GM10248 (cell line): ENCODE measurements at regions of chr16 and their contacts with region 1.

Region 1: DNA sequence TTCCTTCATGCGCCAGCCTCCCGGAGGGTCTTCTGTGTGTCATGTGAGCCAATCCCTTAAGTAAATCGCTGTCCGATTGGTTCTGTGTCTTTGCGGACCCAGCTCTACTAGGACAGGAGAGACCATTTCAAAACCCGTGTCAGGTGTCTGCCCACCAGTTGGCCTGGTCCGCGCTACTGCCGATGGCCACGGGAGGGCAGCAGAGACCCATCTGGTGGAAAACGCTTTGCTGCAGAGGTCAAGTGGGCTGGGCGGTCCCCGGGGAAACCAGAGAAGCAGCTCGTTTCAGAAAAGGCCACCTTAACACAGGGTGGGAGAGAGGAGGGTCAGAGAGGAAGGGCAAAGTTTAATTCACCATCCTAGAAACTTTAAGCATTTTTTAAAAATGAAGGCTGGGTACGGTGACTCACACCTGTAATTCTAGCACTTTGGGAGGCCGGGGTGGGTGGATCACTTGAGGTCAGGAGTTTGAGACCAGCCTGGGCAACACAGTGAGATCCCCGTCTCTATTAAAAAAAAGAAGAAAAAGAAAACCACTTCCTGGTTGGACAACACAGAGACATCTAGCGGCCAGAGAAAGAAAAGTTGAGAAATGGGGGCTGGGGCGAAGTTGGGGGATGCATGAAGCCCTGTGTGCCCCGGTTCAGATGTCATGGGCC is 2.8 kb upstream of the CIBAR2 start:
- DNase-seq: peak; percentile 93
- CTCF ChIP-seq: peak; percentile 98

Region 2: GRCh38 chr16:84985079-84986065 is 129.7 kb before region 1 on chr16:
- CTCF ChIA-PET with region 1: no interaction called
- POLR2A ChIA-PET with region 1: no interaction called
- DNase-seq: no peak
- CTCF ChIP-seq: no peak

Region 3: DNA sequence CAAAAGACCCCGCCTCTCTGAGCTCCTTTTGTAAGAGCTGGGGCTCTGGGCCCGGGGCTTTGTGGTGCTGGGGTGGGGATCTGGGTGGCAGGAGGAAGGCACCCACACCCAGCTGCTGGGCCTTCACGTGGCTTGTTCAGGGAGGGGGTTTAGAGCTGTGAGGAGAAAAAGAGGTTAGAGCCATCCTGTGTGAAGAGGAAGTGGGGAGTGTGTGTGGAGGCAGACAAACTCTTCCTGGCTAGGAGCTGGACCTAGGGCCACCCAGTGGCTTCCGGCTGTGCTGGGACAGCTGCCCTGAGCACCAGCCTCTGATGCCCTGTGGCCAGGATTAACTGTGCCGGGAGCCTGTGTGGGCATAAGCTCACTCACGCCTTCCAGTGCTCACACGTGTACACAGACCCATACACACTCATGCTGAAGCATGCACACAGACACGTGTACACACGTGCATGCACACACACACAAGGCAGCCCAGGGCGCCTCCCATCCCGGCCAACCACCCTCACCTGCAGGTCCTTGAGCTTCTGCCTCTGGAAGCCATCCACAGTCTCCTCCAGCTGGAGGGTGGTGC is 10.1 kb before region 1 on chr16:
- CTCF ChIA-PET with region 1: interaction called, 20 read pairs
- POLR2A ChIA-PET with region 1: no interaction called
- DNase-seq: peak; percentile 48
- CTCF ChIP-seq: no peak

Region 4: DNA sequence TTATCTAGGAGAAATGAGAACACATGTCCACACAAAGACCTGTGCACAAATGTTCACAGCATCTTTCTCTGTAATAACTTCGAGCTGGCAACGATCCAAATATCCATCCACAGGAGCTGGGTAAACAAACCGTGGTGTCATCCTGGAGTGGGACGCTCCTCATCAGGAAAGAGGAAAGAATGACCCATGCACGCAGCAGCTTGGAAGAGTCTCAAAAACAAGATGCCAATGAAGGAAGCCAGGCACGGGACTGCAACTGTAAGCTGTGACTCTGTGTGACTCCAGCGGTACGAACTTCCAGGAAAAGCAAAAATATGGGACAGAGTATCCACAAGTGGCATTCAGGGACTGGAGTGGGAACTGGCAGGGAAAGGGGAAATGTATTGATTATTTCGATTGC is 33.9 kb after region 1 on chr16:
- CTCF ChIA-PET with region 1: interaction called, 10 read pairs
- POLR2A ChIA-PET with region 1: interaction called, 4 read pairs
- DNase-seq: no peak
- CTCF ChIP-seq: no peak

Region 5: DNA sequence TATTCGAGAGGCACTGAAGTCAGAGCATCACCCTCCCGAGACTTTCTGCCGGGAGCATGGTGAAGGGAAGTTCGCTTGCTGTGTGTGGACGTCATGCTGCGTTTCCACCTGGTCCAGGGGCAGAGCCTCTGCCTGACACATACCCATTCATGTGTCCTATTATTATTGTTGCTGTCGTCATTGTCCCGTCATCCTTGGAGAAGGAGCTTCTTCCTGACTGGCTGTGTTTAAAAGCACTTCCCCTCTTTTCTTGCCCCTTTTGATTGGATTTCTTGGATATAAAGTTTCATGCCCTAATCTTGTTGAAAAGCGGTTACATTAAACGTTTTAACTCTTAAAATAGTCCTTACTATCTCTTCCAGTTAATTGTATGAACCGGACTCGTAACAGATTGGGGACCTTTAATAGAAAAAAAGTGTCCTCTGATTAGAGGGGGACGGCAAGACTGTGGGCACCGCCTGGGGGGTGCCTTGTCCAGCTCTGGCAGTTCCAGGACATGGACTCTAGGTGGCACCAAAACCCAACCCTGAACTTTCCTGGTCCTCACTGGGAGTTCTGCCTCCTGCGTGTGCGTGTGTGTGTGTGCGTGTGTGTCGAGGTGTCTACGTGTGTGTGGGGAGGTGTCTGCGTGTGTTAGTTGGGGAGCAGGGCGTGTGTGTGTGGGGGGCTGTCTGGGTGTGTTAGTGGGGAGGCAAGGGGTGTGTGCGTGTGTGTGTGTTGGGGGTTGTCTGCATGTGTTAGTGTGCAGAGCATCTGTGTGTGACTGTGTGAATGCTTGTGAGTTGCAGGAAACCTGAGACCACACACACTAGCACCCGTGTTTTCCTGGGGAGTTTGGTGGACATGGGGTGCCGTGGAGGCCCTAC is 130.5 kb after region 1 on chr16:
- CTCF ChIA-PET with region 1: interaction called, 10 read pairs
- POLR2A ChIA-PET with region 1: interaction called, 3 read pairs
- DNase-seq: peak; percentile 78
- CTCF ChIP-seq: peak; percentile 67

Region 6: DNA sequence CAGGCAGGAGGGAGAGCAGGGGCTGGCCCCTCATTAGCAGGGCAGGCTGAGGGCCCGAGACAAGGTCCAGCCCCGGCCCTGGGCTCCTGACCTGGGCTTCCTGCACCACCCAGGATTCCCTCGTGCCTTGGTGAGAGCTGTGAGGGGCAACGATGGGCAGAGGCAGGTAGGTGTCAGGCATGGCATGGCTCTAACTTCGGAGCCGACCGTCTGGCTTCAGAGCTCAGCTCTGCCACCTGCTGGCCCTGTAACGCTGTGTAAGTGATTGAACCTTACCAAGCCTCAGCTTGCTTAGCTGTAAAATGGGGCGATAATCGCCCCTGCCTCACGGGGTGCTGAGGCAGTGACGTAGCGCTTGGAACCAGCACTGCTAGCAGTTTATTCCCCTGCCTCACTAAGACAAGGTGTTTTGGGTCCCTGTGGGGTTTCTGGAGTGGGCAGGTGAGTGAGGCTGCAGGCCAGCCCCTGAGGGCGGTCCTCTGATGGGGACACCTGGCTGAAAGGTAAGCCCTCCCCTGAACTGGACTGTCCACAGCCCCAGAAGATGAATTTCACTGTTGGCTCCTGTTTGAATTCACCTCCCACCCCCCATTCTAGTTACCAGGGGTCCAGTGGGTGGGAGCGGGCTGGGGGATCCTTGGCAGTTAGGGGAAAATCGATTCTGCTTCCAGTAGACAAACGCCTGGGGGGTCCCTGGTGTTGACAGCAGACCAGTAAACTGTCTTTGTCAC is 313.3 kb after region 1 on chr16:
- CTCF ChIA-PET with region 1: interaction called, 22 read pairs
- POLR2A ChIA-PET with region 1: no interaction called
- DNase-seq: peak; percentile 79
- CTCF ChIP-seq: peak; percentile 82